Naive thymus-derived CD4-positive, alpha-beta T cell (primary cell): ENCODE measurements at regions of chr6 and their contacts with region 1.

Region 1: GRCh38 chr6:152267967-152268845 is 369.0 kb downstream of the SYNE1 start:
- DNase-seq: peak in 5 of 9 donors; percentile 26 to 45 (median 41)
- ATAC-seq: no peak
- H3K4me3 ChIP-seq: no peak overlapping the region
- H3K4me3 Mint-ChIP-seq: no peak overlapping the region
- H3K27ac ChIP-seq: no peak overlapping the region
- H3K27ac Mint-ChIP-seq: no peak overlapping the region
- H3K4me1 ChIP-seq: no peaks in the 10 kb centered on the region
- H3K4me1 Mint-ChIP-seq: peaks cover 0 to 15% (median 0%) of the 10 kb centered on the region in 7 donors
- H3K27me3 ChIP-seq: no peaks in the 10 kb centered on the region
- H3K27me3 Mint-ChIP-seq: no peaks in the 10 kb centered on the region

Region 2: GRCh38 chr6:150891888-150892485 is 1376.2 kb before region 1 on chr6:
- CTCF ChIA-PET with region 1: no interaction called
- POLR2A ChIA-PET with region 1: no interaction called
- intact Hi-C with region 1: loop called in 1 of 2 experiments (anchors 5 kb)
- DNase-seq: peak; percentile 8 to 58 (median 44)
- ATAC-seq: peak; percentile 76
- H3K4me3 ChIP-seq: no peak overlapping the region
- H3K4me3 Mint-ChIP-seq: no peak overlapping the region
- H3K27ac ChIP-seq: no peak overlapping the region
- H3K27ac Mint-ChIP-seq: peak overlapping the region in 1 of 9 donors; percentile 34
- H3K4me1 ChIP-seq: peaks cover 0 to 9% of the 10 kb centered on the region in 2 donors
- H3K4me1 Mint-ChIP-seq: peaks cover 4 to 30% (median 14%) of the 10 kb centered on the region in 7 donors
- H3K27me3 ChIP-seq: no peaks in the 10 kb centered on the region
- H3K27me3 Mint-ChIP-seq: no peaks in the 10 kb centered on the region

Region 3: DNA sequence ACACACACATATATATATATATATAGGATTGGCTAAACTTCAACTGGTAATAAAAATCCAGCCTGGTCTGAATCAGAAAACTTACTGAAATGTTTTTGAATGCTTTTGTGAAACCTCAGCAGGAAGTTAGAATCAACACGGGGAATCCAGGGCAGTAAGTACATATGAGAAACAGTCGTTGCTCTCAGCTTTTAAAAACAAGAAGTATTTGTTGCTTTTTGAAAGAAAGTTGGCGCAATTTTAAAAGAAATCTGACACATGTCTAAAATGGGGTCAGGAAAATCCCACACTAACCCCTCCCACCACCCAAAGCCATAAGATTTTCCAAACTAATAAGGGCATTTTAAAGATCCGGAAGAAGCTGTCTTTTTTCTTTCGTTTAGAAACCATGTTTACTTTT is 785.9 kb before region 1 on chr6:
- CTCF ChIA-PET with region 1: no interaction called
- POLR2A ChIA-PET with region 1: no interaction called
- intact Hi-C with region 1: loop called in 1 of 2 experiments (anchors 10 kb)
- DNase-seq: peak in 1 of 9 donors; percentile 11
- ATAC-seq: peak; percentile 54
- H3K4me3 ChIP-seq: peak overlapping the region; percentile 51
- H3K4me3 Mint-ChIP-seq: peak overlapping the region; percentile 63 to 90 (median 83)
- H3K27ac ChIP-seq: peak overlapping the region; percentile 45
- H3K27ac Mint-ChIP-seq: peak overlapping the region; percentile 85 to 97 (median 93)
- H3K4me1 ChIP-seq: peaks cover 13% of the 10 kb centered on the region in 2 donors
- H3K4me1 Mint-ChIP-seq: peaks cover 6 to 19% (median 15%) of the 10 kb centered on the region in 7 donors
- H3K27me3 ChIP-seq: no peaks in the 10 kb centered on the region
- H3K27me3 Mint-ChIP-seq: no peaks in the 10 kb centered on the region

Region 4: DNA sequence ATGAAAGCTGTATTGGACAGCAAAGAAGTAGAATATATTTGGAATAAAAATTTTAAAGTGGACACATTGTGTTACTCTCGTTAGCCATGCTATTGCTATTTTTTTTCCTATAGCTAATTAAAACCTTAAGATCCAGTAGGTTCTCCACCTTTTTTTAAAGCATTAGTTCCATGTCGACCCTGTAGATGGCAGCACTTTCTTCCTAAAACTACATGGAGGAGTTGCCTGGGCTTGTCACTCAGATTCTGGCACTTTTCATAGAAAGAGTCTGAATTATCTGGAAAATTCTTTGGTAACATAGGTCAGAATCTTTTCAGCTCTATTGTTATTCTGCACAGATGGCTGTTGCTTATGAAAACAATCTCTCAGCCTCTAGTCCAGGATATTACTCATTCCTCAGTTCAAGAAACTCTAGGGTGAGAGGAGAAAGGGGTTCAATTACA is 502.7 kb before region 1 on chr6:
- CTCF ChIA-PET with region 1: interaction called, 4 read pairs
- POLR2A ChIA-PET with region 1: no interaction called
- intact Hi-C with region 1: loop called (anchors 1 kb)
- DNase-seq: peak in 6 of 9 donors; percentile 17 to 55 (median 36)
- ATAC-seq: peak; percentile 64
- H3K4me3 ChIP-seq: no peak overlapping the region
- H3K4me3 Mint-ChIP-seq: no peak overlapping the region
- H3K27ac ChIP-seq: no peak overlapping the region
- H3K27ac Mint-ChIP-seq: no peak overlapping the region
- H3K4me1 ChIP-seq: no peaks in the 10 kb centered on the region
- H3K4me1 Mint-ChIP-seq: peaks cover 0 to 29% (median 10%) of the 10 kb centered on the region in 7 donors
- H3K27me3 ChIP-seq: no peaks in the 10 kb centered on the region
- H3K27me3 Mint-ChIP-seq: peaks cover 0 to 34% (median 7%) of the 10 kb centered on the region in 5 donors

Region 5: GRCh38 chr6:152232501-152233151 is 35.6 kb before region 1 on chr6:
- CTCF ChIA-PET with region 1: no interaction called
- POLR2A ChIA-PET with region 1: interaction called, 3 read pairs
- intact Hi-C with region 1: loop called (anchors 2 to 5 kb)
- DNase-seq: peak in 5 of 9 donors; percentile 1 to 31 (median 21)
- ATAC-seq: peak; percentile 58
- H3K4me3 ChIP-seq: no peak overlapping the region
- H3K4me3 Mint-ChIP-seq: peak overlapping the region; percentile 55 to 84 (median 78)
- H3K27ac ChIP-seq: no peak overlapping the region
- H3K27ac Mint-ChIP-seq: peak overlapping the region; percentile 35 to 95 (median 86)
- H3K4me1 ChIP-seq: peaks cover 2 to 14% of the 10 kb centered on the region in 2 donors
- H3K4me1 Mint-ChIP-seq: peaks cover 10 to 33% (median 30%) of the 10 kb centered on the region in 7 donors
- H3K27me3 ChIP-seq: no peaks in the 10 kb centered on the region
- H3K27me3 Mint-ChIP-seq: no peaks in the 10 kb centered on the region